HCT116 (cell line): ENCODE measurements at regions of chr11 and their contacts with region 1.

Region 1: DNA sequence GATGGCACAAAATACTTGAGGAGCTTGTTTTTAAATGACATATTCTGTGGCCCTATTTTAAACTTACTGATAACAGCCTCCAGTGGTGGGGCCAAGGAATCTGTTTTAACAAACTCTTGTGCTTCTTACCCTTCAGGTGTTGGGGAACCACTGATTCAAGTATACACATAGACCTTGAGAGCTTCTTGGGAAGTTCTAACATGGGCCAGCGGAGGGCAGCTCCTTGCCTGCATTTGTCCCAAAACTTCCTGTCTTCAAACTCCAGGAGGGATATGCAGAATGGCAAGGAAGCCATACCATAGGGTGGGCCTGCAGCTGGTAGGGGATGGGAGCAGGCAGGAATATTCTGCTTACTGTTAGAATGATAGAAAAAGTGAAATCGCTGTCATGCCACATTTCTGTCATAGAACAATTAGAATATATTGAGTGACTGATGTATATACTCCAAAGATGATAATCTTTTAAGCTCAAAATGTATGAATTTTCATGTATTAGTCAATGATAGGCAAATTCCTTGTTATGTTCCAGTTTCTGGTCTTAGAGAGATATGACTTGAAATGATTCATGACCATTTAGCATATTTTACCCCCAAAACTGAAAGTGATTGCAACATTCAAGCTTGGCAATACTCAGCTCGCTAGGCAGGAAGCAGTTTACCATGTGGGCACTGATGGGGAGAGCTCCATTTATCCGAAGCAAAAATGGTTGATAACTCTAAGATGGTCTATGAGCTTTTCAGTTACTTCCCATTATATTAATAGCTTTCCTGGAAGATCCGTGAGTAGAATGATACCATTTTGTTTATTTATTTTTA is 9.2 kb downstream of the EXT2 start:
- DNase-seq: no peak
- ATAC-seq: peak; percentile 88
- H3K4me3 ChIP-seq: no peak overlapping the region
- H3K27ac ChIP-seq: no peak overlapping the region
- H3K4me1 ChIP-seq: no peaks in the 10 kb centered on the region
- H3K27me3 ChIP-seq: no peaks in the 10 kb centered on the region
- CTCF ChIP-seq: peak in 2 of 3 experiments; percentile 20 to 35; a peak in 3 of 6 replicates
- POLR2A ChIP-seq: no peak
- RAD21 ChIP-seq: no peak

Region 2: GRCh38 chr11:44120169-44120568 is 15.5 kb after region 1 on chr11:
- CTCF ChIA-PET with region 1: interaction called, 10 read pairs
- POLR2A ChIA-PET with region 1: no interaction called
- RAD21 ChIA-PET with region 1: no interaction called
- intact Hi-C with region 1: no loop called
- DNase-seq: no peak
- ATAC-seq: peak; percentile 83
- H3K4me3 ChIP-seq: no peak overlapping the region
- H3K27ac ChIP-seq: no peak overlapping the region
- H3K4me1 ChIP-seq: no peaks in the 10 kb centered on the region
- H3K27me3 ChIP-seq: no peaks in the 10 kb centered on the region
- CTCF ChIP-seq: peak; percentile 10 to 60 (median 58); a peak in 4 of 6 replicates
- POLR2A ChIP-seq: no peak
- RAD21 ChIP-seq: peak; percentile 41; the same call in 1 of the 2 replicates

Region 3: DNA sequence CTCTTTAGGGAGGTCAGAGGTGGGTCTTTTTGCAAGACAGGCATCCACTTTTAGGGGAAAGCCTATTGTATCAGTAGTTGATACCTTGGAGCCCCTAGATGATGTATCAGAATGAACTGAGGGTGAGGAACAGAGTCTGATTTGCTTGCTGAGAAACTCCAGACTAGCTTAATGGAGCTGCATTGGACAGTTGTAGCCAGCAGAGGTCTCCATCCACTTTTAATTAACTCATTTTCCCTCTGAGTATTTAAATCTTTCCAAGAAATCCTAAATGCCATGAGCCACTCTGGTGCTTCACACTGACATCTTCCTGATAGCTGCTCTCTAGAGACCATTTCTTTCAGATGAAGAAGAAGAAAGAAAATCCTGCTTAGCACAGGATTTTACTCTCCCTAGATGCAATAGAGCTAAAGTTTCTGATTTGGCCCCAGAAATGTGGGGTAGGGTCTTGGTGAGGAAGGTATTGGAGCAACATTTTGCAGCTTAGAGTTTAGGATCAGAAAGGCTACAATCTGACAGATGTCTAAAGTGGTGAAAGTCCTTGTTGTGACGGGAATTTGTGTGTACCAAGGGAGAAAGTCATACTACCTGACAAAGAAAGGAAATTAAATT is 28.8 kb after region 1 on chr11:
- CTCF ChIA-PET with region 1: interaction called, 11 read pairs
- POLR2A ChIA-PET with region 1: no interaction called
- RAD21 ChIA-PET with region 1: no interaction called
- intact Hi-C with region 1: no loop called
- DNase-seq: no peak
- ATAC-seq: peak; percentile 76
- H3K4me3 ChIP-seq: no peak overlapping the region
- H3K27ac ChIP-seq: no peak overlapping the region
- H3K4me1 ChIP-seq: no peaks in the 10 kb centered on the region
- H3K27me3 ChIP-seq: no peaks in the 10 kb centered on the region
- CTCF ChIP-seq: peak; percentile 36 to 67 (median 64); a peak in 5 of 6 replicates
- POLR2A ChIP-seq: no peak
- RAD21 ChIP-seq: peak; percentile 58

Region 4: GRCh38 chr11:44256673-44257291 is 152.1 kb after region 1 on chr11:
- CTCF ChIA-PET with region 1: no interaction called
- POLR2A ChIA-PET with region 1: no interaction called
- RAD21 ChIA-PET with region 1: no interaction called
- intact Hi-C with region 1: no loop called
- DNase-seq: no peak
- ATAC-seq: no peak
- H3K4me3 ChIP-seq: no peak overlapping the region
- H3K27ac ChIP-seq: no peak overlapping the region
- H3K4me1 ChIP-seq: no peaks in the 10 kb centered on the region
- H3K27me3 ChIP-seq: no peaks in the 10 kb centered on the region
- CTCF ChIP-seq: no peak
- POLR2A ChIP-seq: no peak
- RAD21 ChIP-seq: no peak

Region 5: GRCh38 chr11:45322891-45323600 is 1218.4 kb after region 1 on chr11:
- CTCF ChIA-PET with region 1: no interaction called
- POLR2A ChIA-PET with region 1: no interaction called
- RAD21 ChIA-PET with region 1: no interaction called
- intact Hi-C with region 1: no loop called
- DNase-seq: no peak
- ATAC-seq: no peak
- H3K4me3 ChIP-seq: no peak overlapping the region
- H3K27ac ChIP-seq: no peak overlapping the region
- H3K4me1 ChIP-seq: peaks cover 0 to 4% of the 10 kb centered on the region in 2 experiments; a peak in 1 of 4 replicates
- H3K27me3 ChIP-seq: no peaks in the 10 kb centered on the region
- CTCF ChIP-seq: no peak
- POLR2A ChIP-seq: no peak
- RAD21 ChIP-seq: no peak